ENCODE measurements at regions of chr20 and their contacts with region 1.

Region 1: GRCh38 chr20:22691369-22692118 is 107.2 kb upstream of the FOXA2 start:
- DNase-seq: peak; percentile 87
- ATAC-seq: peak; percentile 95
- H3K4me3 ChIP-seq: peak overlapping the region; percentile 40; the same call in 1 of the 2 replicates
- H3K27ac ChIP-seq: no peak overlapping the region
- H3K4me1 ChIP-seq: peaks cover 5% of the 10 kb centered on the region; the same call in 1 of the 2 replicates
- H3K27me3 ChIP-seq: no peaks in the 10 kb centered on the region
- CTCF ChIP-seq: peak; percentile 95

Region 2: DNA sequence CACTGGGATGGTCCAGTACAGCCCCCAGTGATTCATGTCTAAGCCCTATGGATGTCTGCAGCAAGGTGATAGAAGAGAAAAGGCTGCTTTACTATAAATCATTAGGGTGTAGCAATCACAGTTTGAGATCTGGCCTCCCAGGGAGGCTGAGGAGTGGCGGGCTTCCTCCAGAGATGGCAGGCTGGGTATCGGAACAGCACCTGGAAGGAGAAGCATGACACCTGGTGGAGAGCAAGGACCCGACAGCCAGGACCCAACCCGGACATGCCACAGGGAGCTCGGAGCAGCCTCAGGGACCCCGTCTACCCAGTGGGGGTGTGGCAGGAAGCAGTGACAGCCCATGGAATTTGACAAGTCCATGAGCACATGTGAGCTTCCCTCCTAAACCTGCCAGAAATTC is 509.4 kb after region 1 on chr20:
- CTCF ChIA-PET with region 1: interaction called, 13 read pairs
- POLR2A ChIA-PET with region 1: no interaction called
- intact Hi-C with region 1: loop called (anchors 1 kb)
- DNase-seq: peak; percentile 70
- ATAC-seq: peak; percentile 75
- H3K4me3 ChIP-seq: no peak overlapping the region
- H3K27ac ChIP-seq: no peak overlapping the region
- H3K4me1 ChIP-seq: peaks cover 8% of the 10 kb centered on the region; the same call in 1 of the 2 replicates
- H3K27me3 ChIP-seq: no peaks in the 10 kb centered on the region
- CTCF ChIP-seq: peak; percentile 88

Region 3: GRCh38 chr20:23320317-23320716 is 628.8 kb after region 1 on chr20:
- CTCF ChIA-PET with region 1: interaction called, 4 read pairs
- POLR2A ChIA-PET with region 1: no interaction called
- intact Hi-C with region 1: loop called (anchors 1 kb)
- DNase-seq: peak; percentile 64
- ATAC-seq: peak; percentile 71
- H3K4me3 ChIP-seq: no peak overlapping the region
- H3K27ac ChIP-seq: no peak overlapping the region
- H3K4me1 ChIP-seq: no peaks in the 10 kb centered on the region
- H3K27me3 ChIP-seq: peaks cover 39% of the 10 kb centered on the region
- CTCF ChIP-seq: peak; percentile 73

Region 4: DNA sequence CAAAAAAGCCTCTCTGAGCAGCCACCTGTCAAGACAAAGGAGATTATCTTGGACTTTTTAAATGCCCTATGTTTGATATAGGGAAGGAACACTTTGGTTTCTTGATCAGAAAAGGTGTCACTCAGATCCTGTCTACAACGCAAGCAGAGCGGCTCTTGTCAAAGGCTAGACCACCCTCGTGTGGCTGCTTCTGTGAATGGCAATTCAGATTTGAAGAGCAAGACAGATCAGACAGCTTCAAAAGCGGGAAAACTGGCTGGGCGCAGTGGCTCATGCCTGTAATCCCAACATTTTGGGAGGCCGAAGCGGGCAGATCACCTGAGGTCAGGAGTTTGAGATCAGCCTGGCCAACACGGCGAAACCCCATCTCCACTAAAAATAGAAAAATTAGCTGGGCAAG is 649.0 kb after region 1 on chr20:
- CTCF ChIA-PET with region 1: interaction called, 39 read pairs
- POLR2A ChIA-PET with region 1: no interaction called
- intact Hi-C with region 1: loop called (anchors 1 kb)
- DNase-seq: peak; percentile 82
- ATAC-seq: peak; percentile 87
- H3K4me3 ChIP-seq: no peak overlapping the region
- H3K27ac ChIP-seq: no peak overlapping the region
- H3K4me1 ChIP-seq: no peaks in the 10 kb centered on the region
- H3K27me3 ChIP-seq: no peaks in the 10 kb centered on the region; the same call in 1 of the 2 replicates
- CTCF ChIP-seq: peak; percentile 76

Region 5: GRCh38 chr20:23350196-23350903 is 658.8 kb after region 1 on chr20 and contains the start of gene NXT1:
- CTCF ChIA-PET with region 1: interaction called, 15 read pairs
- POLR2A ChIA-PET with region 1: interaction called, 8 read pairs
- intact Hi-C with region 1: no loop called
- DNase-seq: peak; percentile 99
- ATAC-seq: peak; percentile 87
- H3K4me3 ChIP-seq: peak within 1 kb of the TSS; percentile 89
- H3K27ac ChIP-seq: peak within 1 kb of the TSS; percentile 87
- H3K4me1 ChIP-seq: peaks cover 18% of the 10 kb centered on the region
- H3K27me3 ChIP-seq: no peaks in the 10 kb centered on the region
- CTCF ChIP-seq: no peak
- total RNA-seq, gene NXT1: 82.0 and 98.0 TPM in 2 replicates

Measured in PC-3 (cell line).